Transverse colon (tissue), 4 donors: ENCODE measurements at regions of chr11 and their contacts with region 1.

Region 1: DNA sequence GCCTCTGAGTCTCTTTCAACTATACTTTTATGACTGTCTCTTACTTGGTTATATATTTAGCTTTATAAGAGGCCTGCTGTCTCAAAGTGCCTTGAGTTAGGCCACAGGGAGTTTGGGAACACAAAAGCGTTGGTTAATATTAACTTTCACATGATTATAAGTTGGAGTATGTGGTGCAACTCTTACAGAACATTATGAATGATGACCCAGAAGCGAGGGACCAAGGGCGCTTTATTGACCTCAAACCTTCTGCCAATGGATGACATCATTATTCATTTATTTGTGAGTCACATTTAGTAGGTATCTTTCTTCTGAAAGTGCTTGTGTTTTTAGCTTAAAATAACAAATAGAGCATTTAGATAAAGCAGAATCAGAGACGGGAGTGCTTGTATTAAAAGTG is 298.0 kb upstream of the ZC3H12C start:
- DNase-seq: no peak
- H3K4me3 ChIP-seq: no peak overlapping the region
- H3K27ac ChIP-seq: no peak overlapping the region
- H3K4me1 ChIP-seq: no peaks in the 10 kb centered on the region
- H3K27me3 ChIP-seq: no peaks in the 10 kb centered on the region
- CTCF ChIP-seq: no peak
- EP300 ChIP-seq: no peak
- POLR2A ChIP-seq: no peak

Region 2: DNA sequence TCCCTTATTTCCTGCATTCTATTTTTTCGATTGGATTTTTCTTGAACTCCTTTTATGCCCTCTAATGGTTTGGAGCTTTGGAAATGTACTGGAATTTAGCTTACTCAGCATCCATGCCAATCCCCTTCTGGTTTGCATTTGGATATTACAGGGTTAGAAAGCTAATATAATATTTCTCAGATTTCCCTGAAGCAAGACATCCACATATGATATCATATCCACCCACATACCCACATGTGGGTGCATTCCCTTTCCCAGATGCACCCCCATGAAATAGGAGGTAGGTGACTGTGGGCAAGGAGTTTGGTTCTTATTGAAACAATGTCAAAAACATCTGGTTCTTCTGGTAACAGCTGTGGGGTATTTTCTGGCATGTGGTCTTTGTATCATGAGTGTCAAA is 1163.2 kb before region 1 on chr11:
- in situ Hi-C with region 1: no loop called
- intact Hi-C with region 1: loop called (anchors 5 kb)
- DNase-seq: no peak
- H3K4me3 ChIP-seq: no peak overlapping the region
- H3K27ac ChIP-seq: no peak overlapping the region
- H3K4me1 ChIP-seq: peaks cover 0 to 12% (median 2%) of the 10 kb centered on the region in 4 donors
- H3K27me3 ChIP-seq: no peaks in the 10 kb centered on the region
- CTCF ChIP-seq: no peak
- EP300 ChIP-seq: no peak
- POLR2A ChIP-seq: no peak